PC-3 (cell line): ENCODE measurements at regions of chr1 and their contacts with region 1.

Region 1: DNA sequence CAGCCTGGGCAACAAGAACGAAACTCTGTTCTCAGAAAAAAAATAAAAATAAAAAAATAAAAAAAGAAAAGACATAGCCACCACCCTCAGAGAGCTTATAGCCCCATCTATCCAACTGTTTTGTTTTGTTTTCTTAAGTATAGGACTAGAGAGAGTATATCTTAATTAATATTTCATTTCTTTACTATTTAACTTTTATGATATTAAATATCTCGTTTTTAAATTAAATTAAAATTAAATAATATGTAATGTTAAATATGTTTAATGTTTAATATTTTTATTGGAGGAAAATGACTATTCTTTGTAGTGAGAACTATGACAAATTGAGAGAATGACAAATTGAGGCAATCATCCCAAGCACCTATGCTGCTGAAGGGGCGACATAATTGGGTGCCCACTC is 33.1 kb upstream of the YTHDF2 start:
- DNase-seq: no peak
- ATAC-seq: no peak
- H3K4me3 ChIP-seq: no peak overlapping the region
- H3K27ac ChIP-seq: no peak overlapping the region
- H3K4me1 ChIP-seq: no peaks in the 10 kb centered on the region
- H3K27me3 ChIP-seq: no peaks in the 10 kb centered on the region
- CTCF ChIP-seq: no peak

Region 2: GRCh38 chr1:28591708-28592320 is 111.8 kb before region 1 on chr1 and contains the start of gene RAB42:
- CTCF ChIA-PET with region 1: no interaction called
- POLR2A ChIA-PET with region 1: no interaction called
- intact Hi-C with region 1: no loop called
- DNase-seq: no peak
- ATAC-seq: no peak
- H3K4me3 ChIP-seq: peak within 1 kb of the TSS; percentile 66
- H3K27ac ChIP-seq: no peak within 1 kb of the TSS
- H3K4me1 ChIP-seq: peaks cover 17% of the 10 kb centered on the region
- H3K27me3 ChIP-seq: no peaks in the 10 kb centered on the region
- CTCF ChIP-seq: no peak
- total RNA-seq, gene RAB42: 1.5 and 4.7 TPM in 2 replicates

Region 3: GRCh38 chr1:28668191-28668955 is 35.3 kb before region 1 on chr1 and contains the start of gene GMEB1:
- CTCF ChIA-PET with region 1: no interaction called
- POLR2A ChIA-PET with region 1: interaction called, 10 read pairs
- intact Hi-C with region 1: no loop called
- DNase-seq: peak; percentile 87
- ATAC-seq: peak; percentile 84
- H3K4me3 ChIP-seq: peak within 1 kb of the TSS; percentile 83
- H3K27ac ChIP-seq: peak within 1 kb of the TSS; percentile 68
- H3K4me1 ChIP-seq: peaks cover 10% of the 10 kb centered on the region; the same call in 1 of the 2 replicates
- H3K27me3 ChIP-seq: no peaks in the 10 kb centered on the region
- CTCF ChIP-seq: no peak
- total RNA-seq, gene GMEB1: 5.2 and 10.8 TPM in 2 replicates

Region 4: GRCh38 chr1:28761189-28761588 is 57.6 kb after region 1 on chr1:
- CTCF ChIA-PET with region 1: no interaction called
- POLR2A ChIA-PET with region 1: no interaction called
- intact Hi-C with region 1: no loop called
- DNase-seq: no peak
- ATAC-seq: no peak
- H3K4me3 ChIP-seq: no peak overlapping the region
- H3K27ac ChIP-seq: no peak overlapping the region
- H3K4me1 ChIP-seq: no peaks in the 10 kb centered on the region
- H3K27me3 ChIP-seq: no peaks in the 10 kb centered on the region
- CTCF ChIP-seq: no peak